Right cardiac atrium (tissue), 5 donors: ENCODE measurements at regions of chr6 and their contacts with region 1.

Region 1: DNA sequence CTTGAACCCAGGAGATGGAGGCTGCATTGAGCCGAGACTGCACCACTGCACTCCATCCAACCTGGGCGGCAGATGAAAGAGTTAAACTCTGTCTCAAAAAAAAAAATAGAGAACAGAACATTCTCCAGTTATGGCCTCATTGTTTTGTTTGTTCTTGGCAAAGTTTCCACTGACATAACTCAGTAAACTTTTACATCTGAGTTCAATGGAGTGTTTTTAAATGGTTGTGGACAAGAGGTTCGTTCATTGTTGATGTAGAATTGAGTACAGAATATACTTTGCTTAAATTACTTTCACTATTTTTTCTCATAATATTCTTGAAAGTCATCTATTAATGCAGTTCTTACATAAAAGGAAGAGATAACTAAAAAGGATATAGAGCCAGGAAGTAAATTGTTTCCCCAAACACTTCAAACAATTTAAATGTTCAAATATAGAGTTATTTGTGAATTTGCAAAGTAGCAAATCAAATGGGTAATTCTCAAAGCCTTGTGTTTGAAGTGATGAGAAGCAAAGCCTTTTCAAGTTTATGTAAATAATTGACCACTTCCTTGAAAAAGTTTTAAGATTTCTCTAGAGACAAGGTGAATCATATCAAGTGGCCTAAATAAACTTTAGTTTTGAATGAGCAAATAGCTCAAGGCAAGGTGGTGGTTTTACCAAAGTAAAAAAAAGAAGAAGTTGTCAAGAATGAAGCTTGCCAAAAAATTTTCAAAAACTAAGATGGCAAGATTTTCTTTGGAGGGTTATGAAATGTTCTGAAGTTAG is 42.4 kb upstream of the IFNGR1 start:
- DNase-seq: no peak
- ATAC-seq: peak; percentile 28 to 46
- H3K4me3 ChIP-seq: no peak overlapping the region
- H3K27ac ChIP-seq: no peak overlapping the region
- H3K4me1 ChIP-seq: peaks cover 7% of the 10 kb centered on the region
- H3K27me3 ChIP-seq: no peaks in the 10 kb centered on the region

Region 2: DNA sequence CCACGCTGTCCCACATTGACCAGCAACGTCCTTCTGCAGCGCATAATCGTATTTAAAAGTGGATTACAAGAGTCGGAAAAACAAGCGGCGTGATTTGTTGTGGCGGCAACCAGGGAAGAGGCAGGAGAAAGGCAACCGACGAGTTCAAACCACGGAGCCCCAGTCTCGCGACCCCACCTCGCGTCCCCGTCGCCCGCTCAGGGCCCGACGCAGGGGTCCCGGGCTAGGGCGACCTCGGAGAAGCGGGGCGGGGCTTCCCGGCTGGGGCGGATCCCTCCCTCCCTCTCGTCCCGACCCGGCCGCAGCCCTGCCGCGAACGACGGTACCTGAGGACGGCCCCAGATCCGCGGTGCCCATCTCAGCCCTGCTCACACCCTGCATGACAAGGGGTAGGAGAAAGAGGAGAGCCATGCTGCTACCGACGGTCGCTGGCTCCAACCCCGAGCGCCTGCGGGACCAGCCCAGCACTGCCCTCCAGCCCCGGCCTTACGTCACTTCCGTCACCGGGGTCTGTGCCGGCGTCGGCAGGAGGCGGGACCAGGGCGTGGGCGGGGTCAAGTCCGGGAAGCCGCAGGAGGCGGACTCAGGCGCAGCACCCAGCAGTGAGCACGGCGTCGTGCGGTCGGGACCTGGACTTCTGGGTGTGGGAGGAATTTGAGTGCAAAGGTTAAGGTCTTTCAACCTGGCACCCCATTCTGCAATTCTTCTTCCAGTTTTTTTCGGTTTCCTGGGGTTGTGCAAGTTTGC is 42.5 kb before region 1 on chr6 and contains the start of gene IFNGR1:
- intact Hi-C with region 1: loop called in 1 of 4 experiments (anchors 10 kb)
- DNase-seq: peak; percentile 98 to 100 (median 99)
- ATAC-seq: peak; percentile 98
- H3K4me3 ChIP-seq: peak within 1 kb of the TSS; percentile 83
- H3K27ac ChIP-seq: peak within 1 kb of the TSS; percentile 88
- H3K4me1 ChIP-seq: peaks cover 14% of the 10 kb centered on the region
- H3K27me3 ChIP-seq: no peaks in the 10 kb centered on the region
- total RNA-seq, gene IFNGR1: 115 to 157 (median 141) TPM

Region 3: DNA sequence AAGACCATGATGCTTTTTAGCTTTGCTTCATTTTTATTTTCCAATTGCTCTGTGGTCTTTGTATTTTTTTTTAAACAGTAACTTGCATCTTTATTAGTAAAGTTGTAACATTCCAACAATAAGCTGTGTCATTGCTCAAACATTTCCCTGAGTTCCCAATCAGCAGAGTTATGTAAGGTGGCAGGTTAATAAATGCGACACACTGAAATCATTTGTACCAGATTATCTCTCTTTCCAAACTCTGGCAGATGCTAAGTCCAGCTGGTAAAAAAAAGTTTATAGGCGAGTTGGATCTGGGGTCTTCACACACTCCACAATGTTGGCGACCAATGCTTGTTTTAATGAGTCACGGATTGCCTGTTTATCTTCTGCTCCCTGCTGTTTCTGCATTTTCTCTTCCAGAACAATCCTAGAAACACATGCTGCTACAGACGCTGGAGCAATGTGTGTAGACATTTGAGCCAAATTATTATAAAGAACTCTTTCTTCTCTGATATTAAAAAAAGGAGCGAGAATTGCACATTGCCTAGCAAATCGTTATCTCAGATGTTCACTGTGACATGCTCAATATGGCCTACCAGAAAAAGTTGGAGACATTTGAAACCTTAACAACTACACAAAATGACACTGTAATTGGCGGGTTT is 71.2 kb after region 1 on chr6:
- intact Hi-C with region 1: no loop called
- DNase-seq: no peak
- ATAC-seq: peak; percentile 85 to 93
- H3K4me3 ChIP-seq: no peak overlapping the region
- H3K27ac ChIP-seq: no peak overlapping the region
- H3K4me1 ChIP-seq: no peaks in the 10 kb centered on the region
- H3K27me3 ChIP-seq: no peaks in the 10 kb centered on the region